ENCODE measurements at regions of chr11 and their contacts with region 1.

Region 1: GRCh38 chr11:57335343-57336110 is at the start of gene SSRP1:
- DNase-seq: peak; percentile 89
- H3K4me3 Mint-ChIP-seq: peak within 1 kb of the TSS; percentile 97
- H3K27ac Mint-ChIP-seq: peak within 1 kb of the TSS; percentile 98
- H3K4me1 Mint-ChIP-seq: peaks cover 45% of the 10 kb centered on the region
- H3K27me3 Mint-ChIP-seq: peaks cover 13% of the 10 kb centered on the region
- total RNA-seq, gene SSRP1: 135 to 137 TPM

Region 2: DNA sequence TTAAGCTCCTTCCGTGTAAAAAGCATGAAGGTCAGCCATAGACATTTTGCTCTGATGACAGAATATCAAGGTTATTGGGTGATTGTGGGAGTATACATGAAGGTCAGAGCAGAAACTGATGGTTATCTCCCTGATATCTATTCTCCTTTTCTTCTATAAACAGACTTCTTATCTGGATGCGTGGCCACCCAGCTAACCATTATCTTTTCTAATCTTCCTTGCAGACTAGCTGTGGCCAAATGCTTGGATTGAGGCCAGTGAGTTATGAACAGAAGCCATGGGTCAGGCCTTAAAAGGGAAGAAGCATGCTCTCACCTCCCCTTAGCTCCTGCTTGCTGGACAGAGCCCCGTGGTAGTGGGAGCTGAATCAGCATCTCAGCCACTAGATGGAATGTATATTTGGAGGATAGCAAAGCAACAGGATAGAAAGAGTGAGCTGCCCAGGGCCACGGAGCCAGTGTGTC is 185.0 kb before region 1 on chr11:
- CTCF ChIA-PET with region 1: no interaction called
- POLR2A ChIA-PET with region 1: no interaction called
- DNase-seq: no peak
- H3K4me3 Mint-ChIP-seq: no peak overlapping the region
- H3K27ac Mint-ChIP-seq: no peak overlapping the region
- H3K4me1 Mint-ChIP-seq: no peaks in the 10 kb centered on the region
- H3K27me3 Mint-ChIP-seq: peaks cover 4% of the 10 kb centered on the region

Region 3: GRCh38 chr11:57288771-57289579 is 46.6 kb before region 1 on chr11:
- CTCF ChIA-PET with region 1: no interaction called
- POLR2A ChIA-PET with region 1: no interaction called
- DNase-seq: no peak
- H3K4me3 Mint-ChIP-seq: no peak overlapping the region
- H3K27ac Mint-ChIP-seq: no peak overlapping the region
- H3K4me1 Mint-ChIP-seq: no peaks in the 10 kb centered on the region
- H3K27me3 Mint-ChIP-seq: peaks cover 17% of the 10 kb centered on the region

Region 4: DNA sequence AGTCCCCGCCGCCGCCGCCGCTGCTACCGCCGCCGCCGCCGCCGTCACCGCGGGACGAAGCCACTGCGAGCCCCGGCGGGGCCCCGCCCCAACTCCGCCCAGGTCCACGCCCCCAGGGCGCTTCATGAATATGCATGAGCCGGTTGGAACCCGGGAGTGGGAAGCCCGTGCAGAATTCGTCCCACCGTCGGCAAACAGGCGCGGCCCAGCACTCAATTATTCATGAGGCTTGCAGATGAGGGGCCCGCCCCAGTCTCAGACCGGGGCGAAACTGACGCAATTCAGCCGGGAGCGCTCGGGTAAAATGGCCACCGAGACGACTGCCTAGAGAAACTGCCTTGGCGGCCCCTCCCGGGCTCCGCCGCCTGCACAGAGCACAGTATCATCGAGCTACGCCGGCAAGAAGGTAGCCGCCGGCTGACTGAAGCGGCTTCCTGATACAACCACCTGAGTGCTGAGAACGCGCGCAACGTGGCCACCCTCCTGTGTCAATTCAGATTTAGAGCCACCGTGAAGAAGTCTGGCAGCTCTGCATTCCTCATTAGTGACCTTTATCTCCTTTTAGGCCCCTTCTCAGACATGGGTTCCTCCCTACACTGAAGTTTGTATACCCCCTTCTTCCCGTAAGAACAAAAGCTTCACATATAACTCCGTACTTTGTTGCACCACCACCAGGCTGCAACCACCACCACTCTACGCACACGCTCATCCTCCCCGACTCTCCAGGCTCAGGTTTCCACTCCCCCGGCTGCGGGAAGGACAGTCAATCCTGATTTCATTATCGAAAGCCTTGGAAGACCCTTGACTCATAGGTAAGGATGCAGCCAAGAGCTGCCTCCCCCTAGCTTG is 10.4 kb before region 1 on chr11 and contains the start of gene TNKS1BP1:
- CTCF ChIA-PET with region 1: interaction called, 18 read pairs
- POLR2A ChIA-PET with region 1: interaction called, 127 read pairs
- DNase-seq: peak; percentile 91
- H3K4me3 Mint-ChIP-seq: peak within 1 kb of the TSS; percentile 75
- H3K27ac Mint-ChIP-seq: peak within 1 kb of the TSS; percentile 91
- H3K4me1 Mint-ChIP-seq: peaks cover 49% of the 10 kb centered on the region
- H3K27me3 Mint-ChIP-seq: no peaks in the 10 kb centered on the region
- total RNA-seq, gene TNKS1BP1: 9.9 to 10.7 TPM

Measured in activated CD4-positive, alpha-beta memory T cell treated with anti-CD3 and anti-CD28 coated beads, Interleukin-2, amount 10 ng/mL, durations not matched to agents 7 days and 5 days (primary cell).